ENCODE measurements at regions of chr3 and their contacts with region 1.

Region 1: DNA sequence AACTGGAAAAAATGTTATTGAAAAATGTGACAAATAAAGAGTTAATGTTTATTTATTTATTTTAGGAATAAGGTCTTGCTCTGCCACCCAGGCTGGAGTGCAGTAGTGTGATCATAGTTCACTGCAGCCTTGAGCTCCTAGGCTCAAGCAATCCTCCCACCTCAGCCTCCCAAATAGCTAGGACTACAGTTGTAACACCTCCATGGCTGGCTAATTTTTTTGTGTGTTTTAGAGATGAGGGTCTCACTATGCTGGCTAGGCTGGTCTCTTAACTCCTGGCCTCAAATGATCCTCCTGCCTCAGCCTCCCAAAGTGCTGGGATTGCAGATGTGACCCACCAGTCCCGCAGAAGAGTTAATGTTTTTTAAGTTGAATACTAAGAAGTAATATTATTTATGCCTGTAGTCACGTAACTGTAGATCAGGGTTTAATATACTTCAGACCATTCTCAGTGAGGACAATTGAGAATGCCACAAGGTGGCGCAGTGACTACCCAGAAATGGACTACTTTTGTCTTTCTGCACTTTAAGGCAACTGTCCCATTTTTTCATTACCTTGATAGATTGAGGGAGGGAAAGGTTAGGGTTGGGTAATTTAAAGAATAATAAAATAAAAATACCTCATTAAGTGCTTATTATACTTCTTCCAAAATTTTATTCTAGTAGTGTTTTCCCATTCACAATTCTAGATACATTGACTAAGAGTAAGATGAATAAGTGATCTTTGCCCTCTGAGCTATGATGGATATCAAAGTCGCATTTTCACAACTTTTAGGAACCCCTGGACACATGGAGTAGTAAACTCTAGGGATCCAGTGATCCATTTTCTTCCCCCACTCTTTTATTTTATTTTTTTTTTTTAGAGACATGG is 6.0 kb downstream of the MUC13 start:
- DNase-seq: peak; percentile 73
- H3K4me3 Mint-ChIP-seq: no peak overlapping the region
- H3K27ac Mint-ChIP-seq: no peak overlapping the region
- H3K4me1 Mint-ChIP-seq: peaks cover 12% of the 10 kb centered on the region
- H3K27me3 Mint-ChIP-seq: no peaks in the 10 kb centered on the region
- CTCF ChIP-seq: peak; percentile 67

Region 2: DNA sequence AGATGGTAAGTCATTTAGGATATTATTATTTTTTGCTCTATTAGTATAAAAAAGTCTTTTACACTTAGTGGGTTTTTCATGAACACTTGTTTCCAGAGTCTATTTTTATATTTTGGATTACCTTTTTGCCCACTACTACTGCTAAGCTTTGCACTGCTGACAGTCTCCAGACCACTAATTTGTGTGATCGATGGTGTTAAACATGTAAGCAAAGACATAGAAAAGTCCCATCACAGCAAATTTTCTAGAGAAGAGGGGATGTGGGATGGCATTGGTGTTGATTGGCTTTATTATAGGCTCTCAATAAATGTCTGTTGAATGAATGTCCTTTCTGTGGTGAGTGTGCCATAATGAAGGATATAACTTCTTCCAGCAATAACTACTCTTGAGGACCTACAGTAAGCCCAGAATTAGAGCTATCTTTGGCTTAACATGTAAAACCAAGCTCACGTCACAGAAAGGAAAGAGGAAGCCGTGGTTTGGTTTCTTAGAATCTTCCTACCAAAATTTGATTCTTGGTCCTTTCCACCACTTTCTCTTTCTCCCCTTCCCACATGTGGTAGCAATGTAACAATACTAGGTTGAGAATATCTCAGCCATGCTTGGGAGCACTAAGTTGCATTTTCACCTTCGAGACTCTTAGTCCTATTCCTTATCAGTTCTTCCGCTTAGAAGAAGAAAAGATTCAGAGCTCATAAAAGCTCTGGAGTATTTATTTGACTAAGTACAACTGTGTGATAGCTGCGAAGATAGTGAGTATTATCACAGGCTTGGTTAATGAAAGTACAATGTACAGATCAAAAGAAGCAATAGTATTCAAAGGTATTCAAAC is 288.9 kb before region 1 on chr3:
- CTCF ChIA-PET with region 1: no interaction called
- intact Hi-C with region 1: no loop called
- DNase-seq: no peak
- H3K4me3 Mint-ChIP-seq: no peak overlapping the region
- H3K27ac Mint-ChIP-seq: no peak overlapping the region
- H3K4me1 Mint-ChIP-seq: peaks cover 41% of the 10 kb centered on the region
- H3K27me3 Mint-ChIP-seq: no peaks in the 10 kb centered on the region
- CTCF ChIP-seq: no peak

Region 3: GRCh38 chr3:124986158-124987143 is 57.9 kb after region 1 on chr3:
- CTCF ChIA-PET with region 1: interaction called, 4 read pairs
- intact Hi-C with region 1: loop called (anchors 1 kb)
- DNase-seq: peak; percentile 54
- H3K4me3 Mint-ChIP-seq: no peak overlapping the region
- H3K27ac Mint-ChIP-seq: no peak overlapping the region
- H3K4me1 Mint-ChIP-seq: peaks cover 9% of the 10 kb centered on the region
- H3K27me3 Mint-ChIP-seq: peaks cover 16% of the 10 kb centered on the region
- CTCF ChIP-seq: peak; percentile 43

Region 4: GRCh38 chr3:125055913-125056745 is 127.6 kb after region 1 on chr3 and contains the start of gene HEG1:
- CTCF ChIA-PET with region 1: no interaction called
- intact Hi-C with region 1: loop called (anchors 10 kb)
- DNase-seq: peak; percentile 59
- H3K4me3 Mint-ChIP-seq: peak within 1 kb of the TSS; percentile 58
- H3K27ac Mint-ChIP-seq: no peak within 1 kb of the TSS
- H3K4me1 Mint-ChIP-seq: peaks cover 15% of the 10 kb centered on the region
- H3K27me3 Mint-ChIP-seq: peaks cover 80% of the 10 kb centered on the region
- CTCF ChIP-seq: no peak
- total RNA-seq, gene HEG1: 0.51 and 0.97 TPM in 2 replicates

Region 5: GRCh38 chr3:125437631-125438435 is 509.3 kb after region 1 on chr3:
- CTCF ChIA-PET with region 1: no interaction called
- intact Hi-C with region 1: loop called (anchors 1 kb)
- DNase-seq: peak; percentile 73
- H3K4me3 Mint-ChIP-seq: no peak overlapping the region
- H3K27ac Mint-ChIP-seq: no peak overlapping the region
- H3K4me1 Mint-ChIP-seq: no peaks in the 10 kb centered on the region
- H3K27me3 Mint-ChIP-seq: no peaks in the 10 kb centered on the region
- CTCF ChIP-seq: peak; percentile 97

Region 6: DNA sequence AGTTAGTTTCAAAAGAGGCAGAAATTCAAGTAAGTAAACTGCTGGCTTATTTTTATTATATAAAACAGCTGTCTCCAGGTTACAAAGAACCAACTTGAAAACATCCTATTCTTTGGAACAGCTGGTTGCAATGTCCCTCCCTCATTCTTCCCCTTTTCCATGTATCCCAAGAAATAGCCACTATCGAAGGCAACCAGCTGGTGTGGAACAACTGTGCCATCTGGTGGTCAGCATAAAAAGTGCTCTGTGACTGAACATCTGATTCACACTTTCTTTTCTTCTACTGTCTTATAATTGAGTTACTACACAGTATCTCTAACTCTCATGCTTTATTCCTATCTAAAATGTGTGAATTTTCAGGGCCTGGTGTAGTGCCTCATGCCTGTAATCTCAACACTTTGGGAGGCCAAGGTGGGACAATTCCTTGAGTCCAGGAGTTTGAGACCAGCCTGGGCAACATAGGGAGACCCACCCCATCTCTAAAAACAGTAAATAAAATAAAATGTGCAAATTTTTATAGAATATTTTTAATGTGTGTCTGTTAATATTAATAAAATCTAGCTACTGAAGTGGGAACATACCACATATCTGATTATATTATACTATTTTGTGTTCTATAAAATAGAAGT is 657.1 kb after region 1 on chr3:
- CTCF ChIA-PET with region 1: no interaction called
- intact Hi-C with region 1: loop called (anchors 5 kb)
- DNase-seq: peak; percentile 64
- H3K4me3 Mint-ChIP-seq: no peak overlapping the region
- H3K27ac Mint-ChIP-seq: no peak overlapping the region
- H3K4me1 Mint-ChIP-seq: peaks cover 20% of the 10 kb centered on the region
- H3K27me3 Mint-ChIP-seq: no peaks in the 10 kb centered on the region
- CTCF ChIP-seq: peak; percentile 83

Region 7: DNA sequence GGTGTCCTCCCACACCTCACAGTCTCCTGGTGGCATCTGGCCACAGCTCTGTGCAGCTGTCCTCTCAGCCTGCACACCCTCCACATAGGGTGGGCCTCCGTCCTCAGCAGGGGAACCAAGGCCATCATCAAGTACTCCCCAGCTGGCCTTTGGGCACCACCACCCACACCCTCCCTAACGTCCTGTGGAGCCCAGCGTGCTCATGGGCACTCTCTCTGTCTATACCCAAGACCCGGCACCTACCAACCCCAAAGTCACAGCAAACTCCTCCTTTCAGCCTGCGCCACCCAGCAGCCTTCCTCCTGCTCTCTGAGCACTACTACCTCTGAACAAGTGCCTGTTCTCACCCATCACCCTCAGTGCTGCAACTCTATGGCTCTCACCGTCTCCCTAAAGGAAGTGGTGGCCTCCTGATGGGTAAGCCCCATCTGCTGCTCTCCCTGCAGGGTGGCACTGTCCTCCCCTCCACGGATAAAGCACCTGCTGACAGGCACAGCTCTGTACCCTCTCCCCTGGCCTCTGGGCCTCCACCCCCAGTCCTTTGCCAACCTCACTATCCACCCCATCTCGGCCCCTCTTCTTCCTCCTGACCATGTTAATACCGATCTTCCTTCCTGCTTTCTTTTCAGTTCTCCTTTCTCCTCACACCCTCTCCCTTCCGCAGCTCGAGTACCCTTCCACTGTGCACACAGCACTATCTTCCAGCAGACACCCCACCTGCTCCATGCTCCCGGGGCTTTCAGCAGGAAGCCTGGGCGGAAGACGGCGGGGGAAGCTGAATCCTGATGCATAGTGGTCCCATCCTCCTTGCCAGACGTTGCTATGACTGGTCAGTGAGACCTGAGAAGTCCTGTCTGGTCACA is 1123.9 kb after region 1 on chr3:
- CTCF ChIA-PET with region 1: no interaction called
- intact Hi-C with region 1: no loop called
- DNase-seq: no peak
- H3K4me3 Mint-ChIP-seq: no peak overlapping the region
- H3K27ac Mint-ChIP-seq: no peak overlapping the region
- H3K4me1 Mint-ChIP-seq: peaks cover 16% of the 10 kb centered on the region
- H3K27me3 Mint-ChIP-seq: no peaks in the 10 kb centered on the region
- CTCF ChIP-seq: no peak